ENCODE measurements at regions of chr4 and their contacts with region 1.

Region 1: GRCh38 chr4:41204400-41204978 is 9.9 kb downstream of the APBB2 start:
- DNase-seq: no peak
- H3K4me3 ChIP-seq: no peak overlapping the region
- H3K27ac ChIP-seq: no peak overlapping the region
- H3K4me1 ChIP-seq: peaks cover 43% of the 10 kb centered on the region
- H3K27me3 ChIP-seq: no peaks in the 10 kb centered on the region
- CTCF ChIP-seq: no peak
- POLR2A ChIP-seq: no peak

Region 2: GRCh38 chr4:41155194-41155830 is 49.2 kb before region 1 on chr4:
- intact Hi-C with region 1: loop called (anchors 10 kb)
- DNase-seq: no peak
- H3K4me3 ChIP-seq: no peak overlapping the region
- H3K27ac ChIP-seq: no peak overlapping the region
- H3K4me1 ChIP-seq: peaks cover 57% of the 10 kb centered on the region
- H3K27me3 ChIP-seq: no peaks in the 10 kb centered on the region
- CTCF ChIP-seq: no peak
- POLR2A ChIP-seq: no peak

Region 3: GRCh38 chr4:41268022-41268421 is 63.5 kb after region 1 on chr4:
- intact Hi-C with region 1: no loop called
- DNase-seq: no peak
- H3K4me3 ChIP-seq: no peak overlapping the region
- H3K27ac ChIP-seq: no peak overlapping the region
- H3K4me1 ChIP-seq: no peaks in the 10 kb centered on the region
- H3K27me3 ChIP-seq: no peaks in the 10 kb centered on the region
- CTCF ChIP-seq: no peak
- POLR2A ChIP-seq: no peak